Astrocyte of the cerebellum (primary cell): ENCODE measurements at regions of chr9 and their contacts with region 1.

Region 1: DNA sequence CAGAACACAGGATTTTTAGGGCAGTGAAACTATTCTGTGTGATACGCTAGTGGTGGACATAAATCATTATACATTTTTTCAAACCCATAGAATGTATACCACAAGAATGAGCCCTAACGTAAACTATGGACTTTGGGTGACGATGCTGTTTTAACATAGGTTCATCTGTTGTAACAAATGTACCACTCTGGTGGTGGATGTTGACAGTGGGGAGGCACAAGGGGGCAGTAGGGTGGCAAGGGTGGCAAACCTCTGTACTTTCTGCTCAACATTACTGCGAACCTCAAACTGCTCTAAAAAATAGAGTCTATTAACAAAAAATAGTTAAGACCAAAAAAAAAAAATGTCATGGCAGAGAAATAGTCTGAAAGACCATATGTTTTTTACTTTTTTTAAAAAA is 9.1 kb upstream of the MVB12B start:
- DNase-seq: no peak
- H3K4me3 ChIP-seq: no peak overlapping the region
- CTCF ChIP-seq: peak; percentile 20

Region 2: DNA sequence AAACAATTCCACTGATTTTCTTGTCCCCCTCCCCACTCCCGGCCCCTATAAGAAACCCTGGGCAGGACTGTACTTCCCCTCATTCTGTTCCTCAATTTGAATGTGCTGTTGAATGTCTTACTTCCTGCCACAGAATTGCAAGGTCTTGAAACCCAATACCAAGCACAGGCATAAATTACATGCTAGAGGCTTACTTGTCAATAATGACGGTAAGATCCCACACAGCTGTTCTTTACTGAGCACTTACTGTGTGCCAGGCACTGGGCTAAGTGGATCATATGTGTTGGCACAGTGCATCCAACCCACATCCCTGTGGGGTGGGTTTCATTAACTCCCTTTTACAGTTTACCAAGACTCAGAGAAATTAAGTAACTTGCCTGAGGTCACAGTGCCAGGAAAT is 72.5 kb after region 1 on chr9:
- in situ Hi-C with region 1: loop called (anchors 5 kb)
- DNase-seq: no peak
- H3K4me3 ChIP-seq: no peak overlapping the region
- CTCF ChIP-seq: no peak